CD4-positive, alpha-beta memory T cell (primary cell): ENCODE measurements at regions of chr17 and their contacts with region 1.

Region 1: DNA sequence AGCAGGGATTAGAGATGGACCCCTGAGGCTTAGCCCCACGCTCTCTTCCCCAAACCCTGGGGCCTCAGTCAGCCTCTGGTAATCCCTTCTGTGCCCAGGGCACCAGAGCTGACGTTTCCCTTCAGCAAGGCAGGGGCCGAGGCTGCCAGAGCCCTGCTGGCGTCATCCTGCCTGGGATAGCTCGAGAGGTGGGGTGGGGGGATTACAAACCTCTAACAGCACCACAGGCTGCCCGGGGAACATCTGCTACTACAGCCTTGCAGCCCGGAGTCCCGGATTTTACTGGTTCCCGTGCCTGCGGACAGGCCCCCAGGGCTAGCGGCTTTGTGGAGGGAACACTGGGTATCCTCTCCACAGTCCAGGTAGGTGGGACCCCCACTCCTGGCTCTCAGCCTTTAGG is at the start of gene AANAT:
- DNase-seq: no peak
- H3K4me3 ChIP-seq: no peak within 1 kb of the TSS
- H3K4me3 Mint-ChIP-seq: no peak within 1 kb of the TSS
- H3K27ac ChIP-seq: no peak within 1 kb of the TSS
- H3K27ac Mint-ChIP-seq: peak within 1 kb of the TSS in 1 of 7 donors; percentile 29
- H3K4me1 ChIP-seq: peaks cover 4% of the 10 kb centered on the region
- H3K4me1 Mint-ChIP-seq: peaks cover 3 to 6% (median 3%) of the 10 kb centered on the region in 4 donors
- H3K27me3 ChIP-seq: no peaks in the 10 kb centered on the region
- H3K27me3 Mint-ChIP-seq: no peaks in the 10 kb centered on the region
- total RNA-seq, gene AANAT: not detected

Region 2: GRCh38 chr17:76408052-76408849 is 59.1 kb before region 1 on chr17:
- CTCF ChIA-PET with region 1: interaction called, 11 read pairs
- POLR2A ChIA-PET with region 1: no interaction called
- intact Hi-C with region 1: no loop called
- DNase-seq: peak; percentile 60 to 68 (median 66)
- H3K4me3 ChIP-seq: no peak overlapping the region
- H3K4me3 Mint-ChIP-seq: no peak overlapping the region
- H3K27ac ChIP-seq: no peak overlapping the region
- H3K27ac Mint-ChIP-seq: peak overlapping the region; percentile 6 to 74 (median 59)
- H3K4me1 ChIP-seq: no peaks in the 10 kb centered on the region
- H3K4me1 Mint-ChIP-seq: peaks cover 4 to 14% (median 9%) of the 10 kb centered on the region in 4 donors
- H3K27me3 ChIP-seq: no peaks in the 10 kb centered on the region
- H3K27me3 Mint-ChIP-seq: no peaks in the 10 kb centered on the region

Region 3: GRCh38 chr17:76421044-76421407 is 46.3 kb before region 1 on chr17:
- CTCF ChIA-PET with region 1: no interaction called
- POLR2A ChIA-PET with region 1: no interaction called
- intact Hi-C with region 1: no loop called
- DNase-seq: no peak
- H3K4me3 ChIP-seq: no peak overlapping the region
- H3K4me3 Mint-ChIP-seq: no peak overlapping the region
- H3K27ac ChIP-seq: no peak overlapping the region
- H3K27ac Mint-ChIP-seq: peak overlapping the region in 2 of 7 donors; percentile 15 to 47
- H3K4me1 ChIP-seq: no peaks in the 10 kb centered on the region
- H3K4me1 Mint-ChIP-seq: peaks cover 18 to 39% (median 20%) of the 10 kb centered on the region in 4 donors
- H3K27me3 ChIP-seq: no peaks in the 10 kb centered on the region
- H3K27me3 Mint-ChIP-seq: no peaks in the 10 kb centered on the region

Region 4: GRCh38 chr17:76492989-76493501 is 25.7 kb after region 1 on chr17:
- CTCF ChIA-PET with region 1: interaction called, 161 read pairs
- POLR2A ChIA-PET with region 1: interaction called, 4 read pairs
- intact Hi-C with region 1: no loop called
- DNase-seq: peak; percentile 15 to 53 (median 37)
- H3K4me3 ChIP-seq: peak overlapping the region; percentile 34 to 46
- H3K4me3 Mint-ChIP-seq: peak overlapping the region; percentile 70 to 87 (median 84)
- H3K27ac ChIP-seq: peak overlapping the region; percentile 64
- H3K27ac Mint-ChIP-seq: peak overlapping the region; percentile 74 to 97 (median 94)
- H3K4me1 ChIP-seq: peaks cover 46% of the 10 kb centered on the region
- H3K4me1 Mint-ChIP-seq: peaks cover 17 to 64% (median 42%) of the 10 kb centered on the region in 4 donors
- H3K27me3 ChIP-seq: no peaks in the 10 kb centered on the region
- H3K27me3 Mint-ChIP-seq: no peaks in the 10 kb centered on the region

Region 5: GRCh38 chr17:76506408-76507349 is 39.3 kb after region 1 on chr17:
- CTCF ChIA-PET with region 1: interaction called, 161 read pairs
- POLR2A ChIA-PET with region 1: interaction called, 38 read pairs
- intact Hi-C with region 1: loop called (anchors 1 kb)
- DNase-seq: peak; percentile 83 to 91 (median 86)
- H3K4me3 ChIP-seq: no peak overlapping the region
- H3K4me3 Mint-ChIP-seq: peak overlapping the region in 2 of 8 donors; percentile 15 to 39
- H3K27ac ChIP-seq: no peak overlapping the region
- H3K27ac Mint-ChIP-seq: peak overlapping the region in 6 of 7 donors; percentile 13 to 90 (median 57)
- H3K4me1 ChIP-seq: peaks cover 26% of the 10 kb centered on the region
- H3K4me1 Mint-ChIP-seq: peaks cover 5 to 31% (median 23%) of the 10 kb centered on the region in 4 donors
- H3K27me3 ChIP-seq: no peaks in the 10 kb centered on the region
- H3K27me3 Mint-ChIP-seq: no peaks in the 10 kb centered on the region

Region 6: DNA sequence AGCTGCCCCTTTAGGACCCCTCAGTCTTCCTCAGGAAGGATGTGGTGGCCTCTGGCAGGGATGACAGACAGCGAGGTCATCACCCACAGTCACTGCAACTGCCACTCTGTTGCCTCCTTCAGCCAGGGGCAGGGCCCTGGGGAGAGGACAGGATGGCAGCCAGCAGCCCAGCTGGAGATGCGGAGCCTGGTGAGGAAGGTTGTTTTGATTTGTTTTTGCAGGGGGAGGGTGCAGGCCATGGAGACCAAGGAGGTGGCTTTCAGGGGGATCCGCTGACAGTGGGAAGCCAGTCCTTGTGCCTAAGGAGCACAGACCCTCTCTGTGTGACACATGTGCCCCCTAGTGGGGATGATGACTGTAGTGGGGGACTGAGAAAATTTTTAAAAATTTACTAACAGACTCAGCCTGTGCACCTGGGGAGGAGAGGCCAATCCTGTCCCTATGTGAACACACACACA is 79.8 kb after region 1 on chr17:
- CTCF ChIA-PET with region 1: interaction called, 13 read pairs
- POLR2A ChIA-PET with region 1: no interaction called
- intact Hi-C with region 1: loop called (anchors 1 kb)
- DNase-seq: peak; percentile 37 to 62 (median 59)
- H3K4me3 ChIP-seq: no peak overlapping the region
- H3K4me3 Mint-ChIP-seq: no peak overlapping the region
- H3K27ac ChIP-seq: no peak overlapping the region
- H3K27ac Mint-ChIP-seq: peak overlapping the region in 1 of 7 donors; percentile 38
- H3K4me1 ChIP-seq: peaks cover 7% of the 10 kb centered on the region
- H3K4me1 Mint-ChIP-seq: peaks cover 0 to 2% (median 0%) of the 10 kb centered on the region in 4 donors
- H3K27me3 ChIP-seq: no peaks in the 10 kb centered on the region
- H3K27me3 Mint-ChIP-seq: peaks cover 6% of the 10 kb centered on the region in 2 donors

Region 7: DNA sequence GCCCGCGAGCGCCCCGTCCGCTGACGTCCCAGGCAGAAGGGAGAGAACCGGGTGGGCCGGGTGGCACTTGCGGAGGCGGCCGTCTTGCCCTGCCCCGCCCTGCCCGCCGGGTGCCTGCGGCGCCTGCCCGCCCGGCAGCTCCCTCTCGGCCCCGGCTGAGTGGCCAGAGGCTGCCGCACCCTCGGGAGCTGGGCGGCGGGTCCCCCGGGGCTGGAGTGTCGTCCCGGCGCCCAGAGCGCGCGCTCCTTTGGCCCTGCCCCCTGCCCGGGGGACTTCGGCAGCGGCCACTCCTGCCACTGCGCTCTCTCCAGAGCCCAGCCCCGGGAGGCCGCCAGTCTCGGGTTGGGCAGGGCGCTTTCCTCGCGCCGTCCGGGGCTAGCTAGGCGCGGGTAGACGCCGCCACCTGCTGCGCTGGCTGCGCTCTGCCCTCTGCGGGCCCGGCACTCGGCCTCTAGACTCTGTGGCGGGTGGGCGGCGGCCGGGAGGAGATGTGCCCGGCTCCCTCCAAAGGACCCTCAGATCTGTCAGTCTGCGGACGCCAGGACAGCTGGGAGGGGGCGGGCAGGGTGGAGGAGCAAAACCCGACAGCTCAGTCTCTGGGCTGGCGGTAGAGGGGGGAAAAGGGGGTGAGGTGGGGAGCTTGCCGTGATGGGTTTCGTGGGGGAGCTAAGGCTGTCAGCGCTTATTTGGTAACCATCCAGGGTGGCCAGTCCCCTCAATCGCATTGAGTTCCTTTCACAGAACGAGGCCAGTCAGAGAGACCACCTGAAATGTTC is 118.6 kb after region 1 on chr17 and contains the start of gene ST6GALNAC2:
- CTCF ChIA-PET with region 1: no interaction called
- POLR2A ChIA-PET with region 1: no interaction called
- intact Hi-C with region 1: no loop called
- DNase-seq: peak in 4 of 5 donors; percentile 34 to 58 (median 50)
- H3K4me3 ChIP-seq: peak within 1 kb of the TSS in 1 of 2 donors; percentile 52
- H3K4me3 Mint-ChIP-seq: peak within 1 kb of the TSS; percentile 74 to 83 (median 79)
- H3K27ac ChIP-seq: no peak within 1 kb of the TSS
- H3K27ac Mint-ChIP-seq: peak within 1 kb of the TSS in 2 of 7 donors; percentile 8 to 18
- H3K4me1 ChIP-seq: peaks cover 16% of the 10 kb centered on the region
- H3K4me1 Mint-ChIP-seq: peaks cover 5 to 25% (median 11%) of the 10 kb centered on the region in 4 donors
- H3K27me3 ChIP-seq: peaks cover 12% of the 10 kb centered on the region
- H3K27me3 Mint-ChIP-seq: peaks cover 25 to 29% of the 10 kb centered on the region in 2 donors
- total RNA-seq, gene ST6GALNAC2: 3.3 to 3.6 TPM